AG04450 (cell line): ENCODE measurements at regions of chr4 and their contacts with region 1.

Region 1: GRCh38 chr4:70651864-70652506 is 14.3 kb downstream of the JCHAIN start:
- DNase-seq: no peak
- H3K4me3 ChIP-seq: no peak overlapping the region
- H3K27ac ChIP-seq: no peak overlapping the region
- H3K27me3 ChIP-seq: no peaks in the 10 kb centered on the region
- CTCF ChIP-seq: peak; percentile 54

Region 2: DNA sequence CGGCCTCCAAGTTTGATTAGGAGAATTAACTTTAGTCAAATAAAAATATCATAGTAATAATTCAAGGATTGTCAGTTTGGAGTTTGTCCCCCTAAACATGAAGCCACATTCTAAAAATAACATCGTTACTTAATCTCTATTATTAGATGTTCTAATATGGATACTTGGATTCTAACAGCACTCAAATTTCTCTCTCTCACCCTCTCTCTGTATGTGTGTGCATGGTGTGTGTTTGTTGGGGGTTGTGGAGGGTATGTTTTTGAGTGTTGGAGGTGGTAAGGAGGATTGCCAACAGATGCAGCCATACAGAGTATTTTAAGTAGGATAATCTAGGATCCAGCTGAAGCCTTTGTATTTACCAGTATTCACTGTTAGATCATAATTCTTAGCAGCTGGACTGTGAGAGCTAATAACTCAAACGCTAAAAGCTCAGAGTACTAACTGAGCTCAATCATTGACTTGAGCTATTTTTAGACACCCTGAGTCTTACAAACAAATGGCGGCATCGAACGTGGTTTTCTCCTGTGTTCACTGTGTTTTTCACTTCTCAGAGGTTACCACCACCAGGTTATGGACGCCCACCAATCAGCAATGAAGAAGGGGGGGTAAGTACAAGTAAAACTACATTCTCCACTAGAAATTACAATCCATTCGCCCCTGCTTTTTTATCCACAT is 14.6 kb before region 1 on chr4:
- CTCF ChIA-PET with region 1: interaction called, 11 read pairs
- POLR2A ChIA-PET with region 1: no interaction called
- DNase-seq: no peak
- H3K4me3 ChIP-seq: no peak overlapping the region
- H3K27ac ChIP-seq: no peak overlapping the region
- H3K27me3 ChIP-seq: no peaks in the 10 kb centered on the region
- CTCF ChIP-seq: no peak

Region 3: GRCh38 chr4:70678383-70678999 is 26.5 kb after region 1 on chr4:
- CTCF ChIA-PET with region 1: interaction called, 15 read pairs
- POLR2A ChIA-PET with region 1: no interaction called
- DNase-seq: no peak
- H3K4me3 ChIP-seq: no peak overlapping the region
- H3K27ac ChIP-seq: no peak overlapping the region
- H3K27me3 ChIP-seq: no peaks in the 10 kb centered on the region
- CTCF ChIP-seq: no peak

Region 4: GRCh38 chr4:70993181-70994068 is 341.4 kb after region 1 on chr4 and contains the start of gene DCK:
- CTCF ChIA-PET with region 1: interaction called, 12 read pairs
- POLR2A ChIA-PET with region 1: no interaction called
- DNase-seq: peak; percentile 73
- H3K4me3 ChIP-seq: peak within 1 kb of the TSS; percentile 89
- H3K27ac ChIP-seq: peak within 1 kb of the TSS; percentile 86
- H3K27me3 ChIP-seq: no peaks in the 10 kb centered on the region
- CTCF ChIP-seq: no peak
- polyA plus RNA-seq, gene DCK: 7.0 and 9.8 TPM in 2 replicates